SK-N-SH (cell line): ENCODE measurements at regions of chr3 and their contacts with region 1.

Region 1: DNA sequence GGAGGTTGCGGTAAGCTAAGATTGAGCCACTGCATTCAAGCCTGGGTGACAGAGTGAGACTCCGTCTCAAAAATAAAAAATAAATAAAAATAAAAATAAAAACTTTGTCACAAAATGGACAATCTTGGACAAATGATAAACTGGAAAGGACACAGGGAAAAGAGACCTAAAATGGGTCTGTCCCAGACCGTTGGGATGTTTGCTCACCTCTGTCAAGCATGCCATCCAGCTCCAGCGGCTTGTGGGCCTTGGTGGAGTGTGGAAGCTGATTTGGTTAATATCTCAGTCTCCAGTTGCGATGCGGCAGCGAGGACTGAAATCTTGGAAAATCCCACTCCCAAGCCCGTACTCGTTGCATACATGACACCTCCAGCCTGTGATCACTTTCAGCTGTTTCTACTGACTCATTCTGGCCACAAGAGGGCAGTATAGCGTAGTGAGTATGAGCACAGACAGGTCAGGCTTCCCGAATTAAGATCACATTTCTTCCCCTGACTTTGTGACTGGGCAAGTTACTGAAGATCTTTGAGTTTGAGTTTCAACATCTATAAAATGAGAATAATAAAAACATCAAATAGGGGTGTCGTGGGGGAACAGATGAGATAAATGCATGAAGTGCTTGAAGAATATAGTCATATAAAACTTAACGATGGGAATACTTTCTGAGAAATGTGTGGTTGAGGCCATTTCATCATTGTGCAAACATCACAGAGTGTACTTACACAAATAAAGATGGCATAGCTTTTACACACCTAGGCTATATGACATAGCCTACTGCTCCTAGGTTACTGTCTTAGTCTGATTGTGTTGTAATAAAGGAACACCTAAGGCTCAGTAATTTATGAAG is 19.6 kb upstream of the MOBP start:
- DNase-seq: peak; percentile 78
- H3K4me3 ChIP-seq: no peak overlapping the region
- H3K27ac ChIP-seq: no peak overlapping the region
- H3K4me1 ChIP-seq: peaks cover 0 to 2% of the 10 kb centered on the region in 2 experiments; a peak in 1 of 4 replicates
- H3K27me3 ChIP-seq: no peaks in the 10 kb centered on the region
- CTCF ChIP-seq: peak; percentile 94
- EP300 ChIP-seq: no peak
- RAD21 ChIP-seq: peak; percentile 82

Region 2: DNA sequence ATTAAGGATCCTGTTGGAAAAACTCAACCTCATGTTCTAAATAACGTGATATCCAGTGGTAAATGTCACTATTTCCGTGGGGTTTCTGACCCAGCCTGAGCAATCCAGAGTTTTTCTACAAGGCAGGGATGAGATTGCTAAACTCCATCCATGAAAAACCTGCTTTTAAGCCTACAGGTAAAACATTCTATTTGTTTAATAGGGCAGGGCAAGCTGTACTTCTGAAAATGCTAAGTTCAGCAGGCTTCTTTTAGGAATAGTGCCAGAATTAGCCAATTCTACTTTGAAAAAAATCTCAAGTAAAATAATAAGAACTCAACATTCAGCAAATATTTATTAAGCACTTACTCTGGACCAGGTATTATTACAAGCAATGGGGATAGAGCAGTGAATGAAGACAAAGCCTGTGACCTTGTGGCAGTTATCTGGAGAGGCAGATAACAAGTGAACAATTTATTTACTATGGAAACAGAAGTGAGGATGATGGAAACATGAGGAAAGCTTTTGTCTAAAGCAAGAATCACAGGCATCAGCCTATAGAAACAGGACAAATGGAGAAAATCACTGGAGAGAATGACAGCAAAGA is 28.0 kb before region 1 on chr3:
- CTCF ChIA-PET with region 1: interaction called, 45 read pairs
- POLR2A ChIA-PET with region 1: no interaction called
- DNase-seq: no peak
- H3K4me3 ChIP-seq: no peak overlapping the region
- H3K27ac ChIP-seq: no peak overlapping the region
- H3K4me1 ChIP-seq: peaks cover 0 to 2% of the 10 kb centered on the region in 2 experiments; a peak in 1 of 4 replicates
- H3K27me3 ChIP-seq: no peaks in the 10 kb centered on the region
- CTCF ChIP-seq: no peak
- EP300 ChIP-seq: no peak
- RAD21 ChIP-seq: no peak

Region 3: DNA sequence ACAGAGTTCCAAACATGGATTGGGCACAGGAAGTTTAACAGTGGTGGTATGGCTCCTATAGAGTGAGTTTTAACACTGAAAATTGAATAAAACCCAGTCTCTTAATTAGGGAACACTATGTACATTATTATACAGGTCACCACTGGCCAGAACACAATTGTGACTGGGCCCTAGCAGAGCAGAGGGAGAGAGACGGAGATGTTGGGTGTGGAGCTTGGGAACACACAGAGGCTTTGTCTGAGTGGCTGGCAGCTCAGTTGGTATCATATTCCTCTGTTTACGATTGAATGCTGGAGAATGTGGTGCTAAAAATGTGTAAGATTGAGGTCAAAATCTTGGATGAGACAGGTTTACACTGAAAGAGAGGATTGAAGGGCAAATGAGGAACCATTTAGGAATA is 12.8 kb after region 1 on chr3:
- CTCF ChIA-PET with region 1: interaction called, 35 read pairs
- POLR2A ChIA-PET with region 1: no interaction called
- DNase-seq: no peak
- H3K4me3 ChIP-seq: no peak overlapping the region
- H3K27ac ChIP-seq: no peak overlapping the region
- H3K4me1 ChIP-seq: no peaks in the 10 kb centered on the region
- H3K27me3 ChIP-seq: no peaks in the 10 kb centered on the region
- CTCF ChIP-seq: no peak
- EP300 ChIP-seq: no peak
- RAD21 ChIP-seq: no peak

Region 4: DNA sequence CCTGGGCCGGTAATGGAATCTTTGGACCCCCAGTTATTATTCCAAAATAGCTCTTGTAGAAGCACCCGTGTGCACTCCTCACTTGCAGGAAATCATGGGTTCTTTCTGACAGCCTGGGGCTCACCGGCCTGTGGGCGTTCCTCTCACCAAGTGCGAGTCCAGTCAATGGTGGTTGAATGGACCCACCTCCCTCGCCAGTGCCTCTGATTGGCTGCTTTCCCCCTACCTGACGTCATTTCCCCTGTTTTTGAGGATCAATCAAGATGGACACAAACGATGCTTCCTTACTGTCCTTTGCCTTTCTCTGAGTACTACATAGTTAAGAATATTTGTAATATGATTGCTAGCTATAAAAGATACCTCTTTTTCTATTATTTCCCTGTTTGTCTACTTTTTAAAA is 37.7 kb after region 1 on chr3:
- CTCF ChIA-PET with region 1: interaction called, 10 read pairs
- POLR2A ChIA-PET with region 1: no interaction called
- DNase-seq: no peak
- H3K4me3 ChIP-seq: no peak overlapping the region
- H3K27ac ChIP-seq: no peak overlapping the region
- H3K4me1 ChIP-seq: no peaks in the 10 kb centered on the region
- H3K27me3 ChIP-seq: no peaks in the 10 kb centered on the region
- CTCF ChIP-seq: no peak
- EP300 ChIP-seq: no peak
- RAD21 ChIP-seq: no peak

Region 5: GRCh38 chr3:39501968-39502837 is 54.3 kb after region 1 on chr3:
- CTCF ChIA-PET with region 1: interaction called, 145 read pairs
- POLR2A ChIA-PET with region 1: no interaction called
- DNase-seq: peak; percentile 76
- H3K4me3 ChIP-seq: peak overlapping the region in 1 of 2 experiments; percentile 48; a peak in 2 of 4 replicates
- H3K27ac ChIP-seq: no peak overlapping the region
- H3K4me1 ChIP-seq: peaks cover 0 to 9% of the 10 kb centered on the region in 2 experiments; a peak in 1 of 4 replicates
- H3K27me3 ChIP-seq: peaks cover 33% of the 10 kb centered on the region
- CTCF ChIP-seq: no peak
- EP300 ChIP-seq: no peak
- RAD21 ChIP-seq: no peak

Region 6: DNA sequence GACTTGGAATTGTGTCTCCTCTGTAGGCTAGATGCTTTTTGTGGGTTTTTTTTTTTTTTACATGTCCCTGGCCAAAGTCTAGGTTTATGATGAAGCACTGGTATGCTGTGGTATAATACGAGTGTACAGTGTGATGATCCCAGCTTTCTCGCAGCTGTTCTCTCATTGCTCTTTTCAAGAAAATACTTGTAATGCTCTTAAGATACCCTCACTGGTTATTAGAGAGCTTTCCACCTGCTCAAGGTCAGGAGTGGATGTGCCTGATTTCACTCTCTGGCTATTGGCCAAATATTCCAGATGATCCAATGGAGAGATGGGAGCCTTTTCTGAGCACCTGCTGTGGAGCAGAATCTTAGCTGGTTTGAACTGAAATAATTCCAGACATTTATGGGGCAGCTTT is 576.7 kb after region 1 on chr3:
- CTCF ChIA-PET with region 1: no interaction called
- POLR2A ChIA-PET with region 1: no interaction called
- DNase-seq: no peak
- H3K4me3 ChIP-seq: no peak overlapping the region
- H3K27ac ChIP-seq: no peak overlapping the region
- H3K4me1 ChIP-seq: peaks cover 0 to 6% of the 10 kb centered on the region in 2 experiments; a peak in 2 of 4 replicates
- H3K27me3 ChIP-seq: no peaks in the 10 kb centered on the region
- CTCF ChIP-seq: no peak
- EP300 ChIP-seq: no peak
- RAD21 ChIP-seq: no peak